ENCODE measurements at regions of chr10 and their contacts with region 1.

Region 1: GRCh38 chr10:87054373-87055295 is 34.5 kb downstream of the FAM25A start:
- DNase-seq: no peak
- ATAC-seq: peak; percentile 77
- H3K4me3 ChIP-seq: no peak overlapping the region
- H3K27ac ChIP-seq: no peak overlapping the region
- H3K4me1 ChIP-seq: no peaks in the 10 kb centered on the region
- H3K27me3 ChIP-seq: no peaks in the 10 kb centered on the region
- CTCF ChIP-seq: no peak

Region 2: DNA sequence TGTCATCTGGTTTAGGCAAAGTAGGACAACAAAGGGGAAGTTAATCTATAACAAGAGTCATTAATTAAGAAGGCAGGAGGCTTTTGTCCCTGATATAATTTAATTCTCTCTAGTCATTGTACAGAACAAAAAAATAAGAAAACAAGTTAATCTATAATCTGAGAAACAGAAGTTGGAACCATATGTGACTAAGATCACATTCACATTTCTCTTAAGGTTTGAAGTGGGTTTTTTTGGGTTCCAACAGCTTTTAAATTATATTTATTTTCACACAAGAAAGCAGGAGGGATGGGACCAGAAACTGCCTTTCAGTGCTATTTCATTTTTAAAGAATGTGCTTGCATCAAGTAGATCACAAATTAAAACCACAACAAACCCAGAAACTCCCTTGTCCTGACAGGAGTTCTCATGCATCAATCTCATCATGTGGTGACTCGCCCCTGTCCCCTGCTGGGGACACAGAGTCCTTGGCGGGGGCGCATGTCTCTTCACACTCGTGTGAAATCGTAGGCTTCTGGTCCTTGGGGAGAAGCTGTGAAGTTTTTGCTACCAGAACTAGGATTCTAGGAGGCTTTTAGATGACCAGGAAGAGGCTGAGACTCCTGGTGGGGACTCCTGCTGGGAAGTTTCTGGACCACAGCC is 410.4 kb before region 1 on chr10:
- CTCF ChIA-PET with region 1: no interaction called
- POLR2A ChIA-PET with region 1: no interaction called
- in situ Hi-C with region 1: no loop called
- intact Hi-C with region 1: no loop called
- DNase-seq: no peak
- ATAC-seq: no peak
- H3K4me3 ChIP-seq: no peak overlapping the region
- H3K27ac ChIP-seq: no peak overlapping the region
- H3K4me1 ChIP-seq: peaks cover 29% of the 10 kb centered on the region
- H3K27me3 ChIP-seq: peaks cover 10% of the 10 kb centered on the region; the same call in 1 of the 2 replicates
- CTCF ChIP-seq: no peak

Region 3: DNA sequence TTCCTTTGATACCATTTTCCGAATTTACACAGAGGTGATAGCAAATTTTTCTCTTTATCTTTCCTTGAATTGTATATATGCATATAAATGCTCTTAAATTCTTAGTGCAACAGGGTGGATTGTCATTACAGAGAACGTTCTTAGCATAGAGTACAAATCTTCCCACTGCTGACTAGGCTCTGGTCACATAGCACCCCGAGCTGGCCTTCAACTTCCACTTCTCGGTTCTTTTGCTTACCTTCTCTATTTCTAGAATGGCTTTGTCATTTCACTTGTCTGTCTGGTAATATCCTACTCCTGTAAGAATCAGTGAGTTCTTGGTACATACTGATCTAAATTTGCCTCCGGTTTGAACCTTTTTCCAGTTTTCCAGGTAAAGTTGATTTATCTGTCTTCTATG is 72.9 kb before region 1 on chr10:
- CTCF ChIA-PET with region 1: no interaction called
- POLR2A ChIA-PET with region 1: no interaction called
- in situ Hi-C with region 1: no loop called
- intact Hi-C with region 1: no loop called
- DNase-seq: no peak
- ATAC-seq: no peak
- H3K4me3 ChIP-seq: no peak overlapping the region
- H3K27ac ChIP-seq: no peak overlapping the region
- H3K4me1 ChIP-seq: no peaks in the 10 kb centered on the region
- H3K27me3 ChIP-seq: no peaks in the 10 kb centered on the region
- CTCF ChIP-seq: no peak

Region 4: DNA sequence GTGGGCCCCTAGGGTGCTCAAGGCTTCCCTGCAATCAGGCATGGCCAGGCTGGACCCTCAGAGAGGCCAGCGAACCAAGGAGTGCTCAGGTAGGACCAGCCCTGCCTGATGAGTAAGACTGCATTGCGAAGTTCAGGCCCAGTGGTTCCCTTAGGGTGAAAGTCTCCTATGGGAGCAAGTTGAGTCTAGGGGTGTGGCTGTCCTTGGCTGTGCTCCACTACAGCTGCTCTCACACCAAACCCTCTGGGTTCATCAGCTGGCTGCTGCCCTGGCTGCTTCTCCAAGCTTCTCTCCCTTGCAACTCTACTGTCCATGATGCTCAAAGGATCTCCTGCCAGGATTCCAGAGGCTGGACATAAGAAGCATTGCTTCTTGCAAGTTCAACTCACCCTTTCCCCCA is 15.8 kb before region 1 on chr10:
- CTCF ChIA-PET with region 1: no interaction called
- POLR2A ChIA-PET with region 1: interaction called, 12 read pairs
- in situ Hi-C with region 1: no loop called
- intact Hi-C with region 1: no loop called
- DNase-seq: no peak
- ATAC-seq: peak; percentile 15; the same call in 1 of the 2 replicates
- H3K4me3 ChIP-seq: no peak overlapping the region
- H3K27ac ChIP-seq: no peak overlapping the region
- H3K4me1 ChIP-seq: no peaks in the 10 kb centered on the region
- H3K27me3 ChIP-seq: no peaks in the 10 kb centered on the region
- CTCF ChIP-seq: no peak

Region 5: DNA sequence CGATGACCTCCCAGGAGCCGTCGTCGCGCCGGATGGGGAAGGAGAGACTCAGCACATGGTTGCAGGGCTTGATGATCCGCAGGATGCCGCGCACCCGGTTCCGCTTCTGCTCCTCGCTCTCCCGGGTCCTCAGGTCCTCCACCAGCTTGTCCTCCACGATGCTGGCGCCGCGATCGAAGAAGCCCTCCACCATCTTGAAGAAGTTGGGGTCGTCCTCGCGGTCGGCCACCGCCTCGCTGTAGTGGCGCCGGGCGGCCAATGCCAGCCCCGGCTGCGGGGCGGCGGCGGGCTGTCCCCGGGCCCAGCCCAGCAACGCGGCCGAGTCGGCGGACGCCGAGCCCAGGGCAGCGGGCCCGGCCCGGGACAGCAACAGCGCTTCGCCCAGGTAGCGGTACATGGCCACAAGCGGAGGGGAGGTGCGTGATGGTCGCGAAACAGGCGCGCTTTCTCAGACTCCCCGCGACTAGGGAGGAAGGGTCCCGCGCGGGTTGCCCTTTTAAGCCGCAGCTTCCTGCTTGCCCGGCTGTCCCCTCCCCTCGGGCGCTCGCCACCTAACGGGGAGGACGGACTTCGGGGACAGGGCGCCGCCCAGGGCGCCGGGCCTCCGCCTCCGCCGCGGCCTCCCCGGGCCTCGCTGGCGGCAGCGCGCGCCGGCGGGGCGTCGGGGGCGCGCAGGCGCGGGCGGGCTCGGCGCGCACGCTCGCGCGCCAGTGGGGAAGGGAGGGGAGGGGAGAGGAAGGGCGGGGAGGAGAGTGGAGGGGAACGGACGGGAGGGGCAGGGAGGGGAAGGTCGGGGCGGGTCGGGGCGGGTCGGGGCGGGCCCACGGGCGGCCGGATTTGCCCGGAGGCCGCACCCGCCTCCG is 40.0 kb after region 1 on chr10 and contains the starts of genes GLUD1 and SHLD2:
- CTCF ChIA-PET with region 1: no interaction called
- POLR2A ChIA-PET with region 1: no interaction called
- in situ Hi-C with region 1: no loop called
- intact Hi-C with region 1: no loop called
- DNase-seq: no peak
- ATAC-seq: peak; percentile 92
- H3K4me3 ChIP-seq: peak within 1 kb of the TSS; percentile 82 to 83
- H3K27ac ChIP-seq: peak within 1 kb of the TSS; percentile 90
- H3K4me1 ChIP-seq: peaks cover 27% of the 10 kb centered on the region
- H3K27me3 ChIP-seq: no peaks in the 10 kb centered on the region
- CTCF ChIP-seq: no peak
- total RNA-seq, gene GLUD1: 138 TPM
- total RNA-seq, gene SHLD2: 45.2 TPM

Region 6: DNA sequence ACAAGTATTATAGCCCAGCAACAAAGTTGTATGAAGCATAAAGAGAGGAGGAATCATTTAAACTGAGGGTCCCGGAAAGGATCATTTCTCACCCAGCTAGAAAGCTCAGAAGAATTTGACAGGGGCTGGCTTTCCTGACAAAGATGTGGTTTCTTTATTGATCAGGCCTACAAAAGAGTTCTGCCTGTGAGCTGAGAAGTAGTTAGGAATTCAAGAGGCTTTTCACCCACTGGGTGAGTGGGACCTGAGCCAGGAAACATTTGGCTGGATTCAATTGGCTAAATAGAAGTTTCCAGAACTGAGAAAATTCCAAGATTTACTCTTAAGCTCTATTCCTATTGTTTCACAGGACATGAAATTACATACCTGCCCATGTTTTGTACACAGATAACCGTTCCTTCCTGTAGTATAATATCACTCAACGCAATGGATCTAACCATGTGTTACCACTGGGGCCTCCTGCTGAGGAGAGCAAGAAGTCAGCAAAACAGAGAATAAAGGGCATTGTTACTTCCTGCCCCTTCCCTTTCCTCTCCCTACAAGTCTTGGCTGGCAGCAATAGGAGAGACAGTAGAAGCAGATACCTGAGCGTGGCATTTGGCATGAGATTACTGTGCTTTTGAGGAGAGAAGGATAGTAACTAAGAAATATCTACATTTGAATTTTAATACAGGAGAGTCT is 551.1 kb after region 1 on chr10:
- CTCF ChIA-PET with region 1: no interaction called
- POLR2A ChIA-PET with region 1: no interaction called
- in situ Hi-C with region 1: no loop called
- intact Hi-C with region 1: no loop called
- DNase-seq: no peak
- ATAC-seq: no peak
- H3K4me3 ChIP-seq: no peak overlapping the region
- H3K27ac ChIP-seq: no peak overlapping the region
- H3K4me1 ChIP-seq: no peaks in the 10 kb centered on the region; the same call in 1 of the 2 replicates
- H3K27me3 ChIP-seq: no peaks in the 10 kb centered on the region
- CTCF ChIP-seq: no peak